Endothelial cell of umbilical vein (primary cell): ENCODE measurements at regions of chr1 and their contacts with region 1.

Region 1: DNA sequence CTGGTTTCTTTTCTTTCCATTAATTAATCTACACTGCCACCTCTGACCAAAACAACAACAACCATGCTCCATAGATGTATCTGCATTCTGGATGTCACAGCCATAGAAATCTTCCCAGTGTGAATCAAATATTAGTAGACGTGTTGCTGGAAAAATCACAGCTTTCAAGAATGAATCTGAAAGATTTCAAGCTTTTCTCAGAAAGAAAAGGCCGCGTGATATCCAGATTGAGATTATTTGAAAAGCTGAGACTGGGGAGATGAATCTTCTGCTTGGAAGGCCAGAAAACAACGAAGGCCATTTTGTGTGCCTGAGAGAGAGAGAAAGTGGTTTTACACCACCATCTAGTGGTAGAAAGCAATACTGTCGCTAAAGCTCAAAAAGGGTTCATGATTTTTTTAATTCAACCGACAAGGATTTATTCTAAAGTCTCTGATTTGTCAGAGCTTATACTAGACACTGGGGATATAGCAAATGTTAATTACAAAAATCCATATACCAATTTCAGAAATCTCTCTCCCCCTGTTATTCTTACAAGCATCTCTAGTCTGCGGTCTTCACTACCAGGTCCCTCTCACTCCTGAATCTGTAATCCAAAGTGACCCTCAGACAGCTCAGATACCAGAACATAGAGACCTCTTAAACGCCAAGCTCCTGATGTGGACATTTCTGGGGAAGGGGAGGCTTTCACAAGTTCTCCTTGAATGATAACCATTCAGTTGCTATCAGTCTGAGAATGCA is 87.5 kb upstream of the SGIP1 start:
- DNase-seq: peak; percentile 89
- H3K4me3 ChIP-seq: no peak overlapping the region
- H3K27ac ChIP-seq: peak overlapping the region; percentile 47
- H3K4me1 ChIP-seq: peaks cover 13% of the 10 kb centered on the region
- H3K27me3 ChIP-seq: no peaks in the 10 kb centered on the region
- CTCF ChIP-seq: peak; percentile 51 to 65
- POLR2A ChIP-seq: no peak

Region 2: GRCh38 chr1:65214340-65215027 is 1231.9 kb before region 1 on chr1:
- CTCF ChIA-PET with region 1: interaction called, 5 read pairs
- POLR2A ChIA-PET with region 1: no interaction called
- dilution Hi-C with region 1: no loop called
- intact Hi-C with region 1: loop called (anchors 5 kb)
- DNase-seq: no peak
- H3K4me3 ChIP-seq: no peak overlapping the region
- H3K27ac ChIP-seq: no peak overlapping the region
- H3K4me1 ChIP-seq: no peaks in the 10 kb centered on the region
- H3K27me3 ChIP-seq: no peaks in the 10 kb centered on the region
- CTCF ChIP-seq: no peak
- POLR2A ChIP-seq: no peak

Region 3: DNA sequence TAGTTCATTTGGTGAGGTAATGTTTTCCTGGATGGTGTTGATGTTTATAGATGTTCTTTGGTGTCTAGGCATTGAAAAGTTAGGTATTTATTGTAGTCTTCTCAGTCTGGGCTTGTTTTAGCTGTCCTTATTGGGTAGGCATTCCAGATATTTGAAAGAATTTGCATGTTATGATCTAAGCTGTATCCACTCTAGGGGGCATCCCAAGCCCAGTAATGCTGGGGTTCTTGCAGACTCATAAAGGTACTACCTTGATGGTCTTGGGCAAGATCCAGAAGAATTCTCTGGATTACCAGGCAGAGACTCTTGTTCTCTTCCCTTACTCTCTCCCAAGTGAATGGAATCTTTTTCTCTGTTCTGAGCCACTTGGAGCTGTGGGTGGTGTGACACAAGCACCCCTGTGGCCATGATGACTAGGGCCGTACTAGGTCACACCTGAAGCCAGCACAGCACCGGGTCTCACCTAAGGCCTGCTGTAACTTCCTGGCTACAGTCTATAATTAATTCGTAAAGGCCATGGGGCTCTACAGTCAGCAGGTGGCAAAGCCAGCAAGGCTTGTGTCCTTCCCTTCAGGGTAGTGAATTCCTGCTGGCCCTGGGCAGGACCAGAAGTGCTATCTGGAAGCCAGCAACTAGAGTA is 728.5 kb before region 1 on chr1:
- CTCF ChIA-PET with region 1: interaction called, 5 read pairs
- POLR2A ChIA-PET with region 1: no interaction called
- dilution Hi-C with region 1: no loop called
- intact Hi-C with region 1: loop called (anchors 5 kb)
- DNase-seq: peak; percentile 36
- H3K4me3 ChIP-seq: no peak overlapping the region
- H3K27ac ChIP-seq: no peak overlapping the region
- H3K4me1 ChIP-seq: no peaks in the 10 kb centered on the region
- H3K27me3 ChIP-seq: peaks cover 0 to 3% of the 10 kb centered on the region in 2 experiments
- CTCF ChIP-seq: peak in 1 of 2 donors; percentile 5
- POLR2A ChIP-seq: no peak

Region 4: GRCh38 chr1:65756616-65757015 is 689.8 kb before region 1 on chr1:
- CTCF ChIA-PET with region 1: no interaction called
- POLR2A ChIA-PET with region 1: no interaction called
- dilution Hi-C with region 1: no loop called
- intact Hi-C with region 1: no loop called
- DNase-seq: no peak
- H3K4me3 ChIP-seq: no peak overlapping the region
- H3K27ac ChIP-seq: no peak overlapping the region
- H3K4me1 ChIP-seq: no peaks in the 10 kb centered on the region
- H3K27me3 ChIP-seq: peaks cover 0 to 2% of the 10 kb centered on the region in 2 experiments
- CTCF ChIP-seq: no peak
- POLR2A ChIP-seq: no peak

Region 5: DNA sequence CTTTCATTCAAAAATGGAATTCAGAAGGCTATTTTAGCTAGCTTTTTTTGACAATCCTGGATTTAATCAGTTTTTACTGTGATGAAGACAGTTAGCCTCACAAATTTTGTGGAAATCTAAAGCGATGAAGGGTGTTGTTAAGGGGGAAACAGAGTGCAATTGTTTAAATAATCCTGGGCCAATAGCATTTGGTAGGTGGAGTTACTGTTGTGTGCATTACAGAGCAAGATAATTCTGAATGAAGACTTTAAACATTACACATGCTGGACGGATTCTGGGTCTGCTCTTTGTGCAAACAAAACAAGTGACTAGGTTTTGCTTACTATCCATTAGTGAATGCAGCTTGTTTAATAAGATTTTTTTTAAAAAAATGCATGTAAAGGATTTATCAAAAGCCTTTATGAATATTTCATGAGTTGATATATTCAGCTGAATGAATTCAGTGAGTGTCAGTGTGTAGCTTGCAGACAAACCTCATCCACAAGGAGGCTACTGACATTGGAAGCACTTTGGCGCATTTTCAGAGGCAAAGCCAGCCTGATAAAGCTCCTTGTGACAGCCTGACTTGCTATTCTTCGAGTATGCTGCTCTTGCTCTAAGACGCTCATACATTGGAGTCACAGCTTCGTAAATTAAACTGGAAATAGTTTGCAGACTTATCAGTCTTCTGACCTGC is 454.1 kb before region 1 on chr1:
- CTCF ChIA-PET with region 1: no interaction called
- POLR2A ChIA-PET with region 1: no interaction called
- dilution Hi-C with region 1: no loop called
- intact Hi-C with region 1: no loop called
- DNase-seq: no peak
- H3K4me3 ChIP-seq: no peak overlapping the region
- H3K27ac ChIP-seq: no peak overlapping the region
- H3K4me1 ChIP-seq: no peaks in the 10 kb centered on the region
- H3K27me3 ChIP-seq: no peaks in the 10 kb centered on the region
- CTCF ChIP-seq: no peak
- POLR2A ChIP-seq: no peak

Region 6: GRCh38 chr1:66154394-66154793 is 292.0 kb before region 1 on chr1:
- CTCF ChIA-PET with region 1: no interaction called
- POLR2A ChIA-PET with region 1: no interaction called
- dilution Hi-C with region 1: no loop called
- intact Hi-C with region 1: no loop called
- DNase-seq: no peak
- H3K4me3 ChIP-seq: no peak overlapping the region
- H3K27ac ChIP-seq: no peak overlapping the region
- H3K4me1 ChIP-seq: no peaks in the 10 kb centered on the region
- H3K27me3 ChIP-seq: peaks cover 2 to 4% of the 10 kb centered on the region in 2 experiments
- CTCF ChIP-seq: no peak
- POLR2A ChIP-seq: no peak

Region 7: GRCh38 chr1:66258404-66259105 is 187.9 kb before region 1 on chr1:
- CTCF ChIA-PET with region 1: interaction called, 186 read pairs
- POLR2A ChIA-PET with region 1: no interaction called
- dilution Hi-C with region 1: loop called (anchors 25 kb)
- intact Hi-C with region 1: loop called (anchors 1 kb)
- DNase-seq: no peak
- H3K4me3 ChIP-seq: no peak overlapping the region
- H3K27ac ChIP-seq: no peak overlapping the region
- H3K4me1 ChIP-seq: peaks cover 24% of the 10 kb centered on the region
- H3K27me3 ChIP-seq: no peaks in the 10 kb centered on the region
- CTCF ChIP-seq: no peak
- POLR2A ChIP-seq: no peak

Region 8: DNA sequence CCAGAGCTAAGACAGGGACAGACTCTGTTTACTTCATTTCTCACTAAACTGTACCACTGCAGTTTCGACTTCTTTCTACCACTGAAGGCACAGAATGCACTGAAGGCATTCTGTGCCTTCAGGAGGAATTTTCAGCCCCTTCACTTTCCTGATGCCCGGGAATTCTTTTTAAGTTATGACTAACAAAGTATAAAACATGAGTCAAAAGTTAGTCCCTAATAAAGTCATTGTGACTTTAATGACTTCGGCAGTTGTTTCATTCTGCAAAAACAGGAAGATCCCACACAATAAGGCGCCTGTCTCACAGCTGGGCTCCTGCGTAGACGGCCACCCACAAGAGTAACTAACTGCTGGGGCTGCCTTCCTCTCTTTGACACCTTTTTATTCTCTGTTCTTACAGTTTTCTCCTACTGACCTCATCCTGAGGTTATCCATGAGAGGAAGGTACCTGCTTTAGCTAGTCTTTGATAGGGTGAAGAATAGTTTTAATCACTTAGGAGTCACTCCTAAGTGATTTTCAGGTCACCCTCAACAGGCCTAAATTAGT is 96.4 kb before region 1 on chr1:
- CTCF ChIA-PET with region 1: interaction called, 43 read pairs
- POLR2A ChIA-PET with region 1: no interaction called
- dilution Hi-C with region 1: no loop called
- intact Hi-C with region 1: loop called (anchors 1 kb)
- DNase-seq: peak; percentile 93
- H3K4me3 ChIP-seq: peak overlapping the region in 1 of 3 experiments; percentile 3
- H3K27ac ChIP-seq: peak overlapping the region; percentile 96
- H3K4me1 ChIP-seq: peaks cover 100% of the 10 kb centered on the region
- H3K27me3 ChIP-seq: no peaks in the 10 kb centered on the region
- CTCF ChIP-seq: no peak
- POLR2A ChIP-seq: peak; percentile 14

Region 9: GRCh38 chr1:66503841-66504470 is 57.5 kb after region 1 on chr1:
- CTCF ChIA-PET with region 1: interaction called, 102 read pairs
- POLR2A ChIA-PET with region 1: no interaction called
- dilution Hi-C with region 1: no loop called
- intact Hi-C with region 1: loop called (anchors 1 kb)
- DNase-seq: peak; percentile 88
- H3K4me3 ChIP-seq: no peak overlapping the region
- H3K27ac ChIP-seq: no peak overlapping the region
- H3K4me1 ChIP-seq: peaks cover 5% of the 10 kb centered on the region
- H3K27me3 ChIP-seq: no peaks in the 10 kb centered on the region
- CTCF ChIP-seq: peak; percentile 58 to 76
- POLR2A ChIP-seq: no peak

Region 10: DNA sequence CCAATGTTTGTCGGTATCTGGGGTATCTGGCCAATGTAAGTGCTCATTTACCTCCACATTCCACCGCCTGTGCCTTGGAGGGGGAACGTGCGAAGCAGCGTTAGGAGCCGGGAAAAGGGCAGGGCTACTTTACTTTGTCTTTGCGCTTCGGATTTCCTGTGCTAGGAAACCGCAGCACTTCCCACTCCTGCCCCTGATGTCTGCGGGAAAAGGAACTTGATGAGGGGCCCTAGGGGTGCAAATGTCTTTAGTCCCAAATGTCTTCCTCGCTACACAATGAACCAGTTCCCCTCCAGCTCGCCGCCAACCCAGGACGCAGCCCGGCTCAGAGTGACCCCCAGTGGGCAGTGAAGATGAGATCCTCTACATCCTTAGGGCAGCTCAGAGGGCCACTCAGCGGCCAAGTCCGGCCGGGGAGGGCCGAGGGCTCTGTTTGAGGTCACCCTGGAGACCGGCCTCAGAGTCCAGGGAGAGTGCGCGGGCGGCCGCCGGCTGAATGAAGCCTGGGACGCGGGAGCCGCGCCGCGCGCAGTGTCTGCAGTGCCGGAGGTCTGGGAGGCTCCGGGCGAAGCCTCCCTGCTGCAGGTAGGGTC is 305.7 kb after region 1 on chr1 and contains the start of gene DYNLT5:
- CTCF ChIA-PET with region 1: interaction called, 6 read pairs
- POLR2A ChIA-PET with region 1: no interaction called
- dilution Hi-C with region 1: no loop called
- intact Hi-C with region 1: loop called (anchors 1 kb)
- DNase-seq: peak; percentile 72
- H3K4me3 ChIP-seq: peak within 1 kb of the TSS in 2 of 3 experiments; percentile 27 to 41
- H3K27ac ChIP-seq: peak within 1 kb of the TSS; percentile 25
- H3K4me1 ChIP-seq: peaks cover 26% of the 10 kb centered on the region
- H3K27me3 ChIP-seq: no peaks in the 10 kb centered on the region
- CTCF ChIP-seq: peak; percentile 33 to 46
- POLR2A ChIP-seq: no peak
- total RNA-seq, gene DYNLT5: 4.5 and 12.5 TPM in 2 replicates